ENCODE measurements at regions of chr6 and their contacts with region 1.

Region 1: DNA sequence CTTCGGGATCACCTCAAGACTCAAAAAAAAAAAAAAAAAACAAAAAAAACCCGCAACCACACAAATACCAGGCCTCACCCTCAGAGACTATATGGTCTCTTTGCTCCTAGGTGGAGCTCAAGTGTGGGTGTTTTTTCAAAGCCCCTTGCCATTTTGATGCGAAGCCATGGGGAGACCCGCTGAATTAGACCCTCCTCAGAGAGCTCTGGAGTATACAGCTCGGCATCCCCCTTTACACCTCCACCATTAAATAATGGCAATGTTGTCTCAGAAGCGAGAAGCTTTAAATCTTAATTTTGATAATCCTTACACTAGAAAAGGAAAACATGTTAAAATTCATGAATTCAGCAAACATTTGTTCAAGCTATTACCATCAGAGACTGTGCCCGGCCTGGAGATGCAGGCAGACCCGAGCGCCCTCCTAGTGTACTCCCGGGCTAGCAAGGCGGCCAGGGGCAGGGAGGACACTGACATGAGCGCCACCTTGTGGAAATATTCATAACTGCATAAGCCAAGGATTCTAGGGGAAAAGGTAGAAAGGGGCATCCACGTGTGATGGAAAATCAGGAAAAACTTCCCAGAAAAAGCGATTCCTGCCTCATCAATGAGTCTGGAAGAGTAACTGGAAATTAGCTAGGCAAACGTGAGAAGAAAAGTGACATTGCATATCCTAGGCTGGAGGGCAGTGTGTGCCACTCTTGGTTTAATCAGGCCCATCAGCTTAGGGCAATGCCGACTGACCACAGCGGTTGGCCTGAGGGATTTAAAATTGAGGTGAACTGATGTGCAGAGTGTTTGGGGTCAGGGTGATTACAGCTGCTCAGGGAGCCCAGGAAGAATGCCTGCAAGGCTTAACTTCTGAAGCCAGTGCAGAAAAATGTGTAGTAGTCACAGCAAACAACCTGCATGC is 72.5 kb downstream of the B3GAT2 start:
- DNase-seq: peak; percentile 70
- H3K4me3 Mint-ChIP-seq: no peak overlapping the region
- H3K27ac Mint-ChIP-seq: no peak overlapping the region
- H3K4me1 Mint-ChIP-seq: no peaks in the 10 kb centered on the region
- H3K27me3 Mint-ChIP-seq: peaks cover 4% of the 10 kb centered on the region

Region 2: DNA sequence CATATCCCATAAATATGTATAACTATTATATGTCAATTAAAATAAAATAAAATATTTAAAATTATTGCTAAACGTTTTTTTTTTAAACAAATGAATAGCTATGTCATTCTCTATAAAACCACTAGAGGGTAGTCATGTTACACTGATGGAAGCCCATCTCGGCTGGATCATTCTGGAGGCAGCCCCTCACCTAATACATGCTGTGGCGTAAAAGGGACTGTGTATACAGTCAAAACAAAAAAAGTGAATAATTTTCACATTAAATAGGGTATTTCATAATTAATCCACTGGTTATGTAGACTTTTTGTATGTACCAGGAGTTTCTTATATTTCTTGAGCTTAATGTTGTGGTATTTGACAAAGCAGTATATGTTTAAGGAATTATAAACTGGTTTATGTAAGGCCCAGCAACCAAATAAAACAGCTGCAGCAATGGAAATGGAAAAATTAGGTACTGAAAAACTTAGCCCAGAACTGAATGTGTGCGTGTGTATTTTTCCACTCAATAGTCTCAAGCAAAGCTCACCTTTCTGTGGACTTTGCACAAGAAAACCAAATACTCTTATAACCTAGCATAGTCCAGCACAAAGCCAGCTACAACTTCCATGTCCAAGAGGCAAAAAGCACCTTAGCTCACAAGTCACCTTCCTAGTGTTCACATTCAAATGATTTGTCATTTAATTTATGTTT is 663.2 kb before region 1 on chr6:
- CTCF ChIA-PET with region 1: interaction called, 5 read pairs
- intact Hi-C with region 1: loop called (anchors 1 kb)
- DNase-seq: no peak
- H3K4me3 Mint-ChIP-seq: no peak overlapping the region
- H3K27ac Mint-ChIP-seq: no peak overlapping the region
- H3K4me1 Mint-ChIP-seq: no peaks in the 10 kb centered on the region
- H3K27me3 Mint-ChIP-seq: peaks cover 13% of the 10 kb centered on the region

Region 3: GRCh38 chr6:70520575-70520974 is 363.8 kb before region 1 on chr6:
- CTCF ChIA-PET with region 1: interaction called, 17 read pairs
- intact Hi-C with region 1: loop called (anchors 1 kb)
- DNase-seq: peak; percentile 24
- H3K4me3 Mint-ChIP-seq: no peak overlapping the region
- H3K27ac Mint-ChIP-seq: no peak overlapping the region
- H3K4me1 Mint-ChIP-seq: peaks cover 7% of the 10 kb centered on the region
- H3K27me3 Mint-ChIP-seq: no peaks in the 10 kb centered on the region

Region 4: DNA sequence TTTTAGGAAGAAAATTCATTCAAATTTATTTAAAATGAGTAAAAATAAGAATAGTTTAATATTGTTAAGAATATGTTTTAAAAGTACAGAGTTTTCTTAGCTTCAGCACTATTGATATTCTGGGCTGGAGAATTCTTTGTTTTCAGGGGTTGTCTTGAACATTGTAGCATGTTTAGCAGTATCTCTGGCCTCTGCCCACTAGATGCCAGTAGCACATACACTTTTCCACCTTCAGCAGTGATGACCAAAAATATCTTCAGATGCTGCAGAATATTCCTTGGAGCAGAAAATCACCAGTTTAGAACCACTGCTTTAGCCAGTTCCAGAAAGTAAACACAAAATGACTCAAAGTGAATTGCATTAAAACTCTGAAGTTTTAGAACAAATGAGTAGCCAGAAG is 337.0 kb before region 1 on chr6:
- CTCF ChIA-PET with region 1: interaction called, 4 read pairs
- intact Hi-C with region 1: loop called (anchors 1 kb)
- DNase-seq: peak; percentile 25
- H3K4me3 Mint-ChIP-seq: no peak overlapping the region
- H3K27ac Mint-ChIP-seq: no peak overlapping the region
- H3K4me1 Mint-ChIP-seq: no peaks in the 10 kb centered on the region
- H3K27me3 Mint-ChIP-seq: no peaks in the 10 kb centered on the region

Region 5: GRCh38 chr6:70955441-70956190 is 71.3 kb after region 1 on chr6:
- CTCF ChIA-PET with region 1: interaction called, 4 read pairs
- intact Hi-C with region 1: loop called (anchors 1 kb)
- DNase-seq: peak; percentile 93
- H3K4me3 Mint-ChIP-seq: peak overlapping the region; percentile 74
- H3K27ac Mint-ChIP-seq: no peak overlapping the region
- H3K4me1 Mint-ChIP-seq: peaks cover 4% of the 10 kb centered on the region
- H3K27me3 Mint-ChIP-seq: peaks cover 49% of the 10 kb centered on the region

Region 6: DNA sequence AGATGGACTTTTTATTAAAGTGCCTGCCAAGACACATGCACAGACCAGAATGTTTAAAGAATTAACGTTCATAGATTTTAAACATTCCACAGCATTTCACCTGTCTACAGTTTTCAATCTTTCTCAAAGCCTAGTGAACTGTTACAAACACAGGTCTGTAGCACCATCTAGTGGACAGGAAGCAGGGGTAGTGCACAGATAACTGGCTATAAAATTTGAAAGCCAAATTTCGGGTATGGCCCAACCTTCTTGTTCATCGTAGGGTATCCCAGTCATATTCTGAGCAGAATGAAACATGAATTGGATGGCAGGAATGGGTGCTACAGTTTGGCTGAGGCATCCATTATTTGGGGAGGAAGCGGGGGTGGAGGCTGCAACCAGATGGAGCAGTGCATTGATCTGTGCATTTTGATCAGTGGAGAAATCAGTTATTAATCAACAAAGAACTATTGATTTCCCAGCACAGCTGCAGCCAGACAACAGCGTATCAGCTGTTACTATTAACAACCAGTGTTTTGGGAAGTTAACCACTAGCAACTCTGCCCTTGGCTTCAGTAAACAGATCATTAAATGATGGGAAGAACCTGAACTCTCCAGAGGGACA is 128.6 kb after region 1 on chr6:
- CTCF ChIA-PET with region 1: interaction called, 6 read pairs
- intact Hi-C with region 1: loop called (anchors 5 kb)
- DNase-seq: peak; percentile 17
- H3K4me3 Mint-ChIP-seq: no peak overlapping the region
- H3K27ac Mint-ChIP-seq: no peak overlapping the region
- H3K4me1 Mint-ChIP-seq: no peaks in the 10 kb centered on the region
- H3K27me3 Mint-ChIP-seq: peaks cover 11% of the 10 kb centered on the region